ENCODE measurements at regions of chr12 and their contacts with region 1.

Region 1: DNA sequence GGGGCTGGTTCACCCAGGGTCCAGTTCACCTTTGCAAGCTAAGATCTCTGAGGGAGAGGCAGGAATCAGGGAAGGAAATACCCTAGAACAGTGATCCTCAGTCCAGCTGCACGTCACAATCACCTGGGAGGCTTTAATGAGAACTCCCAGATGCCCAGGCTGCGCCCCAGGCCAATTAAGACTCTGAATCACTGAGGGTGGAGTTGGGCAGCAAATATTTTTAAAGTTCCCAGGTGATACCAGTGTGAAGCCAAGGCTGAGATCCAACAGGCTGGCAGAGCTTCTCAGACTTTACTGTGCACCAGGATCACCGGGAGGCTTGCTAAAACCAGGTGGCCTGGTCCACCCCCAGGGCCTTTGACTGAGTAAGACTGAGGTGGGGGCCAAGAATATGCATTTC is 23.8 kb downstream of the MYL2 start:
- DNase-seq: no peak
- H3K4me3 ChIP-seq: no peak overlapping the region
- H3K4me3 Mint-ChIP-seq: no peak overlapping the region
- H3K27ac ChIP-seq: no peak overlapping the region
- H3K27ac Mint-ChIP-seq: no peak overlapping the region
- H3K4me1 ChIP-seq: peaks cover 7% of the 10 kb centered on the region
- H3K4me1 Mint-ChIP-seq: peaks cover 4 to 8% (median 5%) of the 10 kb centered on the region in 4 donors
- H3K27me3 ChIP-seq: peaks cover 4% of the 10 kb centered on the region
- H3K27me3 Mint-ChIP-seq: peaks cover 9% of the 10 kb centered on the region in 2 donors

Region 2: DNA sequence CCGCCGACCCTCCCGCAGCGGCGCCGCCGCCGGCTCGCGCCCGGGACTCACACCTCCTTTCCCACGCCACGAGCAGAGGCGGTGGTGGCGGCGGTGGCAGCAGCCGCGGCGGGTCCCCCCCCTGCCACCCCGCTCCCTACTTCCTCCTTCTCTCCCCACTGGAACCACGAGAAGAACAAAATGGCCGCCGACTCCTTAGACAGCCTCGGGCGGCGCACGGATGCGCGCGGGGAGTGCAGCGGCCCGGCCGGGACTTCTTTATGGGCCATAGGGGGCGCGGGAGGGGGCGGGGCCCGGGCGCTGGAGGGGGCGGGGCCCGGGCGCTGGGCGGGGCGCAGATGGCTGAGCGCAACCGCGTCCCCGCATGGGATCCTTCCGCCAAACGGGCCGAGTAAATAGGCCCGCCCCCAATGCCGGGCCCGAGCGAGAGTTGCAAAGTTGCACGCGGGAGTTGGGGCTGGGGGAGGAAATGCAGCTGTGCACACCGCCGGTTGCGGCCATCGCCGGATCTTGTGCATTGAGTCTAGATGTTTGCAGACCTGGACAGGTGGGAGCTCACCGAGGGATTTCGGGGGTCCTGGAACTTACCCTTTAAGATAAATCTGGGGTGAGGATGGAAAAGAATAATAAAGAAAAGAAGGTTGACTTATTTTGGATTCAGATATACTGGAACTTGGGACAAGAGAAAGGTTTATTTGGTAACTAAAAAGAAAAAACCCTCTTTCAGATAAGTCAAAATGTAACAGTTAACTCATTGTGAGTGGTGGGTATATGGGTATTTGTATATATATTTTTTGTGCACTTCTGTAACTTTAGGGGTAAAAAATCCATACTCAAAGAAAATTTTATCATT is 153.6 kb before region 1 on chr12 and contains the start of gene PPP1CC:
- CTCF ChIA-PET with region 1: no interaction called
- POLR2A ChIA-PET with region 1: no interaction called
- intact Hi-C with region 1: no loop called
- DNase-seq: peak; percentile 91 to 95 (median 92)
- H3K4me3 ChIP-seq: peak within 1 kb of the TSS; percentile 66 to 69
- H3K4me3 Mint-ChIP-seq: peak within 1 kb of the TSS; percentile 96 to 100 (median 100)
- H3K27ac ChIP-seq: peak within 1 kb of the TSS; percentile 59
- H3K27ac Mint-ChIP-seq: peak within 1 kb of the TSS; percentile 96 to 99 (median 98)
- H3K4me1 ChIP-seq: peaks cover 32% of the 10 kb centered on the region
- H3K4me1 Mint-ChIP-seq: peaks cover 26 to 65% (median 41%) of the 10 kb centered on the region in 4 donors
- H3K27me3 ChIP-seq: no peaks in the 10 kb centered on the region
- H3K27me3 Mint-ChIP-seq: no peaks in the 10 kb centered on the region
- total RNA-seq, gene PPP1CC: 147 to 168 TPM

Region 3: GRCh38 chr12:111298582-111299436 is 402.2 kb after region 1 on chr12:
- CTCF ChIA-PET with region 1: interaction called, 3 read pairs
- POLR2A ChIA-PET with region 1: no interaction called
- intact Hi-C with region 1: loop called (anchors 5 kb)
- DNase-seq: peak in 4 of 5 donors; percentile 16 to 30 (median 21)
- H3K4me3 ChIP-seq: no peak overlapping the region
- H3K4me3 Mint-ChIP-seq: no peak overlapping the region
- H3K27ac ChIP-seq: no peak overlapping the region
- H3K27ac Mint-ChIP-seq: no peak overlapping the region
- H3K4me1 ChIP-seq: no peaks in the 10 kb centered on the region
- H3K4me1 Mint-ChIP-seq: no peaks in the 10 kb centered on the region
- H3K27me3 ChIP-seq: no peaks in the 10 kb centered on the region
- H3K27me3 Mint-ChIP-seq: peaks cover 4% of the 10 kb centered on the region in 2 donors